ENCODE measurements at regions of chr6 and their contacts with region 1.

Region 1: GRCh38 chr6:165729307-165729936 is 66.4 kb upstream of the PDE10A start:
- DNase-seq: no peak
- H3K4me3 ChIP-seq: no peak overlapping the region
- H3K27ac ChIP-seq: no peak overlapping the region
- H3K4me1 ChIP-seq: no peaks in the 10 kb centered on the region
- H3K27me3 ChIP-seq: no peaks in the 10 kb centered on the region
- CTCF ChIP-seq: peak; percentile 62 to 79 (median 69)
- POLR2A ChIP-seq: no peak

Region 2: DNA sequence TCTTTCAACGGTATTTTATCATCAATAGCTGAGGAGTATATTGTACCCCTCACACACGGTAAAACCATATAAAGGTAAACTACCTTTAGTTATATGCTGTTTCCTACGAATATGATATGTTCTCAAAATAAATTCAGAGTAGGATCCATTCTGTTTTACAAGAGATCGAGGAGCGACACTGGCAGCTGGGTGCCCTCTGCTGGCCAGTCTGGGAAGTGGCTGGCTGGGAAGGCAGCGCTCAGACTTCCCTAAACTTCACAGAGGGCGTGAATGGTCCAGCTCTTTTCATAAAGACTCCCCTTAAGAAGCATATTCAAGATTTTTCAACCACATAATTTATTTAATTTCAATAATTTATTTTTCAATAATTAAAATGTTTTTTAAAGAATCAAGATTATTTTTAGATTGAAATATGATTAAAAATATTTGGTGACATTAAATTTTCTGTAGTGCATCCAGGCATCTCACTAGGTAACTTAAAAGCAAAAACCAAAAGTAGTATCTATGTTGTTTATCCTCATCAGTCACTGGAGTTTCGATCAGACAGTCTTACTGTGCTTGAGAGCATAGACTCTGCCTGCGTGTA is 121.1 kb after region 1 on chr6:
- intact Hi-C with region 1: loop called (anchors 5 kb)
- DNase-seq: peak; percentile 71 to 78
- H3K4me3 ChIP-seq: peak overlapping the region in 2 of 3 donors; percentile 24 to 34
- H3K27ac ChIP-seq: no peak overlapping the region
- H3K4me1 ChIP-seq: no peaks in the 10 kb centered on the region
- H3K27me3 ChIP-seq: peaks cover 0 to 15% of the 10 kb centered on the region in 2 donors
- CTCF ChIP-seq: peak; percentile 79 to 89 (median 88)
- POLR2A ChIP-seq: no peak

Region 3: DNA sequence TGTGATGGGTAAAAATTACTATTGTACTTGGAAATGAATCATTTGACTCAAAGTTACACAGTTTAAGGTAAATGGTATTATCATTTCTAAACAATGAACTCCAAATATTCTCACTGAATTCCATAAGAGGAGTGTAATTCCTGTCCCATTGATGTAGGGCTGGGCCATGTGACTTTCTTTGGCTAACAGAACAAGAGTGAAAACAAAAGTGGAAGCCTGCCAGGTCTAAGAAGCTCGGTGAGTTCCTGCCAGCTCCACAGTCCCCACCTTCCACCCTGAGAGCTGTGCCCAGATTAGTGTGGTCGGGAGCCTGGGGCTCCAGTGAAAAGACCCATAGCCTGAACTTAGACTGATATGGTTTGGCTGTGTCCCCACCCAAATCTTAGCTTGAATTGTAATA is 413.6 kb after region 1 on chr6:
- intact Hi-C with region 1: no loop called
- DNase-seq: no peak
- H3K4me3 ChIP-seq: no peak overlapping the region
- H3K27ac ChIP-seq: no peak overlapping the region
- H3K4me1 ChIP-seq: no peaks in the 10 kb centered on the region
- H3K27me3 ChIP-seq: no peaks in the 10 kb centered on the region
- CTCF ChIP-seq: no peak
- POLR2A ChIP-seq: no peak

Measured in breast epithelium (tissue), 4 donors.